ENCODE measurements at regions of chr3 and their contacts with region 1.

Region 1: GRCh38 chr3:140595295-140595694 is 82.6 kb upstream of the TRIM42 start:
- DNase-seq: no peak

Region 2: GRCh38 chr3:140342668-140343067 is 252.6 kb before region 1 on chr3:
- intact Hi-C with region 1: loop called in 1 of 2 experiments (anchors 5 kb)
- DNase-seq: no peak

Region 3: GRCh38 chr3:140627756-140628155 is 32.5 kb after region 1 on chr3:
- intact Hi-C with region 1: loop called in 1 of 2 experiments (anchors 1 kb)
- DNase-seq: no peak